GM13976 (cell line): ENCODE measurements at regions of chr14 and their contacts with region 1.

Region 1: DNA sequence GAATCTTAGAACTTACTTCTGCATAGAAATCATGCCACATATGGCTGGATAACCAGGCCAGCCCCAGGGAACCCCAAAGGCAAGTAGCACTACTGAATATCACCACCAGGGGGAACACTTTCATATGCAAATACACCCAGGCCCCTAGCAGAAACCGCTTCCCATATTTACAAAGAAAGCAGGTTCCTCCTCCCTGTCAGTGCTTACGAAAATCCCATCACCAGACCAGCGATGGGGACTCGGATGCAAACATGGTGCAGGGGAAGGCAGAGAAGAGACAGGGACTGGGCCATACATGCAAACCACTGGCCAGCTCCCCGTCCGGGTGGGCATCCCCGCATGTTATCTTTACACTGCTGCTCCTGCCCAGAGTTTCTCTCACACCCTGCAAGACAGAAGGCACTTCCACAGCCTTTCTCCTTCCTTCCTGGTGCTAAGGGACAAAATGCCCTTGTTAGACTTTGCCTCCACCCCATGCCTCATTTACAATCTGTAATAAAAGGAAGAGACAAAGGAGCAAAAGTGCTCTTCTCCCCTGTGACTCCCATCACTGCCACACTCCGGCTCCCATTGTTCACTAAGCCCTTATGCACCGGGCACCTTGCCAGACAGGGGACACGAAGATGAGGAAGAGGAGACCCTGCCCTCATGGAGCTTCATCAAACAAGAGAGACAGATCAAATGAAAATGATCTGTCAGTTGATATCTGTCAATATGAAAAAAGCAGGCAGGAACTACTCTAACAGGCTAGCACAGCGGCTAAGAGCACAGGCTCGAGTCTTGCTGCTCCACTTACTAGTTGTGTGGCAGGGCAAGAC is 62.3 kb downstream of the PTPN21 start:
- DNase-seq: peak; percentile 75
- CTCF ChIP-seq: peak; percentile 45

Region 2: GRCh38 chr14:88289234-88289633 is 203.2 kb before region 1 on chr14:
- in situ Hi-C with region 1: no loop called
- DNase-seq: no peak
- CTCF ChIP-seq: no peak

Region 3: DNA sequence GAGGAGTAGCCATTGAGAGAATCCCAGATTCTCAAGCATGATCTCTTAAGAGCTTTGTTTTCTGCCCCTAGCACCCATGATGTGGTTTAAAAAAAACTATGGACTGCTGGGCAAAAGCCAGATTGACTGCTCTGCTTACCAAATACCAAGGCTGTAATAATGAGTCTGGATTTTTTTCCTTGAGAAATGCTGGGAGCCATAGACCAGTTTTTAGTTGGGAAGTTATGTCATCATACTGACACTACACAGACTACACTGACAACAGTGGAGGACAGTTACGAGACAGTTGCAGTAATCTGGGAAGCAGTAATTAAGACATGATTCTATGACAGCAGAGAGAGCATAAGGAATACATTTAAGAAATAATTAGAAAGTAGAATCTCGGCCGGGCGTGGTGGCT is 71.2 kb before region 1 on chr14:
- in situ Hi-C with region 1: no loop called
- DNase-seq: no peak
- CTCF ChIP-seq: no peak

Region 4: DNA sequence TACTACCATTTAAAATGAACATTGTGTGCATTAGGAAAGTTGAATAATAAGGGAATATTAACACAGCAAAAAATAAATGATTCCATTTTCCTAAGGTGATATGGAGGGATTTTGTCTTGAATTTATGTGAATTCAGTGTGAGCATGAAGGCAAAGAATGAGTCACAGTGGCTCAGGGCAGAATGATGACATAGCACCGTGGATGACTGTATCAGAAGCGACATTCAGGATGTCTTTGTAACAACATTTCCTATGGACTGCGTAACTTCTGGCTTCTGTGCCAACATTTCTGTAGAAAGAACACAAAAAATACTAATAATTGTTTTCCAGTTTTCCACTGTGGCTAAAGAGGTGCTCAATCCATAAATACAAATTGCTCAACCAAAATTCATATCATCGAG is 386.5 kb after region 1 on chr14:
- in situ Hi-C with region 1: loop called (anchors 25 kb)
- DNase-seq: no peak
- CTCF ChIP-seq: no peak